ENCODE measurements at regions of chr3 and their contacts with region 1.

Region 1: DNA sequence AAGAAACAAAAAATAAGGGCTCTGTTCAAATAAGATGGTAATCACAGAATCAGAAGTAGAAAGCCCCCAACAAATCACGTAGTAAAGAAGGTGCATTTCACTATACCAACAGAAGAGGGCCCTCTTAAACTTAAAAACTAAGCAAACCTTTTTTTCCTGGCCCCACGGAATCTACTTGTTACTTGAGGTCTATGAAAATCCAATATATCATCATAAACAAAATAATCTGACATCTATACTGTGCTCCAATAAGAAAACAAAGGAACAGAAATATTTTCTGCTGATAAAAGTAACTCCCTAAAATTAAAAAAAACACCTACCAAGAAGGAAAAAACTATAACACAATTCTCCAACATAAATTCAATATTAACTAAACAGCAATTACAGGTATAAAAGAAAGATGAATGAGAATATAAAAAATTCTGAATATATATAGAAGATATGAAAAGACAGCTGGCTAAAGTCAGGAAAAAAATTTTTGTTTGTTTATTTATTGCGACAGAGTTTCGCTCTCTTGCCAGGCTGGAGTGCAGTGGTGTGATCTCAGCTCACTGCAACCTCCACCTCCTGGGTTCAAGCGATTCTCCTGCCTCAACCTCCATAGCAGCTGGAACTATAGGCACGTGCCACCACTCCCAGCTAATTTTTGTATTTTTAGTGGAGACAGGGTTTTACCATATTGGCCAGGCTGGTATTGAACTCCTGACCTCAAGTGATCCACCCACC is 81.8 kb downstream of the CLASP2 start:
- DNase-seq: no peak
- H3K4me3 ChIP-seq: no peak overlapping the region
- H3K27ac ChIP-seq: no peak overlapping the region
- H3K4me1 ChIP-seq: peaks cover 0 to 9% (median 3%) of the 10 kb centered on the region in 4 donors
- H3K27me3 ChIP-seq: no peaks in the 10 kb centered on the region
- CTCF ChIP-seq: peak; percentile 54 to 63 (median 57)
- EP300 ChIP-seq: no peak
- POLR2A ChIP-seq: no peak

Region 2: GRCh38 chr3:33787328-33788009 is 151.2 kb after region 1 on chr3:
- in situ Hi-C with region 1: loop called (anchors 5 to 10 kb)
- intact Hi-C with region 1: loop called (anchors 5 kb)
- DNase-seq: peak; percentile 68
- H3K4me3 ChIP-seq: peak overlapping the region in 1 of 4 donors; percentile 32
- H3K27ac ChIP-seq: no peak overlapping the region
- H3K4me1 ChIP-seq: peaks cover 0 to 4% (median 2%) of the 10 kb centered on the region in 4 donors
- H3K27me3 ChIP-seq: no peaks in the 10 kb centered on the region
- CTCF ChIP-seq: peak; percentile 70 to 74 (median 71)
- EP300 ChIP-seq: no peak
- POLR2A ChIP-seq: no peak

Region 3: GRCh38 chr3:33975463-33975862 is 339.2 kb after region 1 on chr3:
- in situ Hi-C with region 1: no loop called
- intact Hi-C with region 1: no loop called
- DNase-seq: no peak
- H3K4me3 ChIP-seq: no peak overlapping the region
- H3K27ac ChIP-seq: no peak overlapping the region
- H3K4me1 ChIP-seq: no peaks in the 10 kb centered on the region
- H3K27me3 ChIP-seq: no peaks in the 10 kb centered on the region
- CTCF ChIP-seq: no peak
- EP300 ChIP-seq: no peak
- POLR2A ChIP-seq: no peak